GM12878 (cell line): ENCODE measurements at regions of chr10 and their contacts with region 1.

Region 1: GRCh38 chr10:48656241-48656913 is 28.3 kb upstream of the WDFY4 start:
- DNase-seq: peak; percentile 90
- ATAC-seq: peak; percentile 91
- H3K4me3 ChIP-seq: peak overlapping the region; percentile 68
- H3K27ac ChIP-seq: no peak overlapping the region
- H3K4me1 ChIP-seq: peaks cover 11% of the 10 kb centered on the region
- H3K27me3 ChIP-seq: no peaks in the 10 kb centered on the region
- CTCF ChIP-seq: peak; percentile 86 to 100 (median 96); a peak in 5 of 6 replicates
- EP300 ChIP-seq: no peak
- POLR2A ChIP-seq: 0 out of 2 replicates have a peak, but pooled peaks have one; percentile 43
- RAD21 ChIP-seq: peak; percentile 93

Region 2: GRCh38 chr10:47300429-47300931 is 1355.9 kb before region 1 on chr10:
- CTCF ChIA-PET with region 1: no interaction called
- POLR2A ChIA-PET with region 1: no interaction called
- RAD21 ChIA-PET with region 1: no interaction called
- SMC1A ChIA-PET with region 1: no interaction called
- in situ Hi-C with region 1: no loop called
- intact Hi-C with region 1: no loop called
- DNase-seq: no peak
- ATAC-seq: no peak
- H3K4me3 ChIP-seq: no peak overlapping the region
- H3K27ac ChIP-seq: no peak overlapping the region
- H3K4me1 ChIP-seq: no peaks in the 10 kb centered on the region
- H3K27me3 ChIP-seq: peaks cover 3 to 9% of the 10 kb centered on the region in 2 experiments; a peak in 3 of 4 replicates
- CTCF ChIP-seq: no peak
- EP300 ChIP-seq: no peak
- POLR2A ChIP-seq: no peak
- RAD21 ChIP-seq: no peak

Region 3: GRCh38 chr10:48306265-48306869 is 350.0 kb before region 1 on chr10 and contains the start of gene MAPK8:
- CTCF ChIA-PET with region 1: interaction called, 17 read pairs
- POLR2A ChIA-PET with region 1: no interaction called
- RAD21 ChIA-PET with region 1: interaction called, 9 read pairs
- SMC1A ChIA-PET with region 1: interaction called, 4 read pairs
- in situ Hi-C with region 1: no loop called
- intact Hi-C with region 1: no loop called
- DNase-seq: peak; percentile 69
- ATAC-seq: peak; percentile 81
- H3K4me3 ChIP-seq: peak within 1 kb of the TSS; percentile 92
- H3K27ac ChIP-seq: peak within 1 kb of the TSS; percentile 66
- H3K4me1 ChIP-seq: peaks cover 14% of the 10 kb centered on the region
- H3K27me3 ChIP-seq: no peaks in the 10 kb centered on the region
- CTCF ChIP-seq: no peak
- EP300 ChIP-seq: no peak
- POLR2A ChIP-seq: peak; percentile 95
- RAD21 ChIP-seq: no peak
- polyA plus RNA-seq, gene MAPK8: 3.9 to 4.3 TPM

Region 4: DNA sequence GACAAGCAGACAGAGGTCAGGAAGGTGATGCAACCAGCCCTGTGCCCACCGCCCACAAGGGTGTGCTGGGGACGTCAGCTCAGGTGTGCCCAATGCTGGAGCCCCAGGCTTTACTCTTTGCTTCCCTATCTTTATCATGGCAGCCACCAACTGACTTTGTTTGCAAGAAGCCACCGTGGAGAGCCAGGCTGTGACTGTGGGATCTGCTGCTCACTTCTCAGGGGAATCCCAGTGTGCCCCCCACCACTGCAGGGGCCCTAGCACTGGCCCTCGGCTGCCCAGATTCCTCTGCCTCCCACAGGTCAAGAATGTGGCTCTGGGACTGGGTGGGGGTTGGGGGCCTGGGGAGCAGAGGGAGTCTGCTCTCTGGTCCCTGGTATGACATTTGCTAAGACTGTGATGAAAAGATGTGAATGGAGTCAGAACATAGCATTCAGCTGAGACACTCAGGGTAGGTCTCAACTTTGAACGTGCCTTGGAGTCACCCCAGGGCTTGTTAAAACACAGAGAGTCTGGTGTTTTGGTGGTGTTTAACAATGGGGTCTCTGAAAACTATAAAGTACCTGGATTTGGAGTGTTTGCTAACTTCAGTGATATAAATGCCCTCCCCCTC is 98.8 kb before region 1 on chr10:
- CTCF ChIA-PET with region 1: interaction called, 436 read pairs
- POLR2A ChIA-PET with region 1: no interaction called
- RAD21 ChIA-PET with region 1: interaction called, 333 read pairs
- SMC1A ChIA-PET with region 1: interaction called, 173 read pairs
- in situ Hi-C with region 1: loop called (anchors 5 kb)
- intact Hi-C with region 1: loop called (anchors 1 kb)
- DNase-seq: no peak
- ATAC-seq: no peak
- H3K4me3 ChIP-seq: no peak overlapping the region
- H3K27ac ChIP-seq: no peak overlapping the region
- H3K4me1 ChIP-seq: no peaks in the 10 kb centered on the region
- H3K27me3 ChIP-seq: no peaks in the 10 kb centered on the region; a peak in 1 of 4 replicates
- CTCF ChIP-seq: no peak
- EP300 ChIP-seq: no peak
- POLR2A ChIP-seq: no peak
- RAD21 ChIP-seq: no peak

Region 5: GRCh38 chr10:48614481-48615390 is 41.6 kb before region 1 on chr10:
- CTCF ChIA-PET with region 1: interaction called, 664 read pairs
- POLR2A ChIA-PET with region 1: interaction called, 7 read pairs
- RAD21 ChIA-PET with region 1: interaction called, 383 read pairs
- SMC1A ChIA-PET with region 1: interaction called, 298 read pairs
- in situ Hi-C with region 1: no loop called
- intact Hi-C with region 1: no loop called
- DNase-seq: peak; percentile 72
- ATAC-seq: peak; percentile 81
- H3K4me3 ChIP-seq: peak overlapping the region; percentile 19; the same call in 1 of the 2 replicates
- H3K27ac ChIP-seq: peak overlapping the region; percentile 56; the same call in 1 of the 2 replicates
- H3K4me1 ChIP-seq: peaks cover 15% of the 10 kb centered on the region
- H3K27me3 ChIP-seq: no peaks in the 10 kb centered on the region
- CTCF ChIP-seq: peak; percentile 18 to 54 (median 40); a peak in 4 of 6 replicates
- EP300 ChIP-seq: no peak
- POLR2A ChIP-seq: no peak
- RAD21 ChIP-seq: no peak

Region 6: DNA sequence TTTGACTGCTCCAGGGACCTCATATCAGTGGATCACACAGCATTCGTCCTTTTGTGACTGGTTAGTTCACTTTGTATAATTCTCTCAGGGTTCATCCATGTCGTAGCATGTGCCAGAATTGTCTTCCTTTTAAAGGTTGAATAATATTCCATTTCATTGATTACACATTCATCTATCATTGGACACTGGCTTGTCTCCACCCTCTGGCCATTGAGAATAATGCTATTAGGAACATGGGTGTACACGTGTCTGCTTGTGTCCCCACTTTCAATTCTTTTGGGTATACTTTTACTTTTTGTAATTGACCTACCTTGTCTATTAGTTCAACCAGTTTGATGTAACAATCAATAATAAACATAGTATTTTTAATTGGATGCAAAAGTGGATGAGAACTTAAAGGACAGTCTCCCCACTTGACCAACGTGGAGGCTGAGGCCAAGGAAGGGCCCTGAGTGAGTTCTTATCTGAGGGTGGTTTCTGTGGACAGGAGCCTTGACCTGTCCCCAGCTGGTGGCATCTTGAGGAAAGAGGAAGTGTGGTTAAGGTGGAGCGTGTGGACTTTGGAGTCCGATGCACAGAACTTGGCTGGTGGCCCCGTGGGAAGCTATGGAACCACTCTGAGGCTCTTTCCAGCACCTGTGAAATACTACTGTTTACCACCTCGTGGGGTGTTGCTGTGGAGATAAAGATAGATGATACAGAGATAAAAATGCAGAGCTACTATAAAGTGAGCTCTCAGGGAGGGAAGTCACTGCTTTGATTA is 44.9 kb after region 1 on chr10:
- CTCF ChIA-PET with region 1: interaction called, 221 read pairs
- POLR2A ChIA-PET with region 1: no interaction called
- RAD21 ChIA-PET with region 1: interaction called, 171 read pairs
- SMC1A ChIA-PET with region 1: interaction called, 170 read pairs
- in situ Hi-C with region 1: loop called (anchors 5 kb)
- intact Hi-C with region 1: loop called (anchors 1 kb)
- DNase-seq: no peak
- ATAC-seq: peak; percentile 49
- H3K4me3 ChIP-seq: no peak overlapping the region
- H3K27ac ChIP-seq: no peak overlapping the region
- H3K4me1 ChIP-seq: peaks cover 38% of the 10 kb centered on the region
- H3K27me3 ChIP-seq: no peaks in the 10 kb centered on the region
- CTCF ChIP-seq: peak; percentile 23 to 59 (median 43); a peak in 4 of 6 replicates
- EP300 ChIP-seq: no peak
- POLR2A ChIP-seq: no peak
- RAD21 ChIP-seq: peak; percentile 73

Region 7: GRCh38 chr10:48802611-48803071 is 146.3 kb after region 1 on chr10:
- CTCF ChIA-PET with region 1: interaction called, 86 read pairs
- POLR2A ChIA-PET with region 1: no interaction called
- RAD21 ChIA-PET with region 1: interaction called, 26 read pairs
- SMC1A ChIA-PET with region 1: interaction called, 42 read pairs
- in situ Hi-C with region 1: loop called (anchors 5 kb)
- intact Hi-C with region 1: loop called (anchors 2 kb)
- DNase-seq: peak; percentile 95
- ATAC-seq: peak; percentile 94
- H3K4me3 ChIP-seq: no peak overlapping the region
- H3K27ac ChIP-seq: peak overlapping the region; percentile 43
- H3K4me1 ChIP-seq: peaks cover 50% of the 10 kb centered on the region
- H3K27me3 ChIP-seq: no peaks in the 10 kb centered on the region
- CTCF ChIP-seq: no peak; a peak in 1 of 6 replicates
- EP300 ChIP-seq: peak; percentile 77 to 92; a peak in 3 of 4 replicates
- POLR2A ChIP-seq: no peak
- RAD21 ChIP-seq: no peak

Region 8: GRCh38 chr10:49177391-49178355 is 521.3 kb after region 1 on chr10:
- CTCF ChIA-PET with region 1: interaction called, 5 read pairs
- POLR2A ChIA-PET with region 1: no interaction called
- RAD21 ChIA-PET with region 1: no interaction called
- SMC1A ChIA-PET with region 1: interaction called, 5 read pairs
- in situ Hi-C with region 1: loop called (anchors 10 kb)
- intact Hi-C with region 1: no loop called
- DNase-seq: peak; percentile 85
- ATAC-seq: peak; percentile 85
- H3K4me3 ChIP-seq: no peak overlapping the region
- H3K27ac ChIP-seq: peak overlapping the region; percentile 87
- H3K4me1 ChIP-seq: peaks cover 51% of the 10 kb centered on the region
- H3K27me3 ChIP-seq: no peaks in the 10 kb centered on the region
- CTCF ChIP-seq: no peak
- EP300 ChIP-seq: peak; percentile 67 to 83
- POLR2A ChIP-seq: no peak
- RAD21 ChIP-seq: peak; percentile 21; the same call in 1 of the 2 replicates

Region 9: GRCh38 chr10:49220031-49220430 is 563.7 kb after region 1 on chr10:
- CTCF ChIA-PET with region 1: no interaction called
- POLR2A ChIA-PET with region 1: no interaction called
- RAD21 ChIA-PET with region 1: no interaction called
- SMC1A ChIA-PET with region 1: no interaction called
- in situ Hi-C with region 1: no loop called
- intact Hi-C with region 1: no loop called
- DNase-seq: no peak
- ATAC-seq: no peak
- H3K4me3 ChIP-seq: no peak overlapping the region
- H3K27ac ChIP-seq: no peak overlapping the region
- H3K4me1 ChIP-seq: no peaks in the 10 kb centered on the region
- H3K27me3 ChIP-seq: no peaks in the 10 kb centered on the region; a peak in 3 of 4 replicates
- CTCF ChIP-seq: no peak
- EP300 ChIP-seq: no peak
- POLR2A ChIP-seq: no peak
- RAD21 ChIP-seq: no peak